ENCODE measurements at regions of chr5 and their contacts with region 1.

Region 1: GRCh38 chr5:151051066-151051930 is 29.5 kb downstream of the TNIP1 start:
- DNase-seq: peak; percentile 69 to 83
- ATAC-seq: peak; percentile 83
- H3K4me3 ChIP-seq: no peak overlapping the region
- H3K27ac ChIP-seq: peak overlapping the region; percentile 56 to 73 (median 67)
- H3K4me1 ChIP-seq: peaks cover 8 to 10% of the 10 kb centered on the region in 2 donors
- H3K27me3 ChIP-seq: no peaks in the 10 kb centered on the region
- CTCF ChIP-seq: peak; percentile 88 to 96 (median 95)
- POLR2A ChIP-seq: no peak

Region 2: DNA sequence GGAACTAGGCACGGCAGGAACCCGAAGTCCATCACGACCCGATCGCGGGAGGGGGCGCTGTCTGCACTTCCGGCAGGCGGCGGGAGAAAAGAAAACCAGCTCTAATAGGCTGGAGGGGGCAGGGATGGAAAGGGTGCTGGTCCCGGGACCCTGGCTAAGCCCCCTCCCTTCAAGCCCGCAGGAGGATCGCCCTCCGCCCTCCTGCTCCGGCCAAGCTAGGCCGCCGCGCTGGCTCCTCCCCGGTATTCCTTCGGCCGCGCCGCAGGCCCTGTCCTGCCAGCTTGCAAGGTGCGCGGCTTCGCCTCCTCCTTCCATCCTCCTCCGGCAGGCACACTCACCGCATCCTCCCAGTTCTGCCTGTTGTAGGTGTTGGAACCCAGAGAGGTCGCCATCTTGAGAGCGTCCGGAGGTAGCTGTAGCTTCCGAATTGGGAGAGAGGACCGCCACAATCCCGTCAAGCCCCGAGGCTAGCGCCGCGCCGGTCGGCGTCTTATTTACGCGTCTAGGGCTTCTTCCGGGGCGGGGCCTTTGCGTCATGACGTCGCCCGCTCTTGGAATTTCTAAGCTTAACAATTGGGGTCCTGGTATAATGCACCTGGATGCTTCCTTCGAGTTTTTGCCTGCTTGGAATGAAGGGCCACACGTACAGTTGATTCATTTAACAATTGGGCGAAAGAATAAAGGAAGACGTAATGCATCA is 350.6 kb before region 1 on chr5 and contains the start of gene RBM22:
- in situ Hi-C with region 1: no loop called
- intact Hi-C with region 1: no loop called
- DNase-seq: peak; percentile 91 to 93
- ATAC-seq: peak; percentile 98
- H3K4me3 ChIP-seq: peak within 1 kb of the TSS; percentile 67 to 98 (median 98)
- H3K27ac ChIP-seq: peak within 1 kb of the TSS; percentile 89 to 99 (median 98)
- H3K4me1 ChIP-seq: peaks cover 13 to 14% of the 10 kb centered on the region in 2 donors
- H3K27me3 ChIP-seq: no peaks in the 10 kb centered on the region
- CTCF ChIP-seq: peak; percentile 52 to 84 (median 59)
- POLR2A ChIP-seq: peak; percentile 82 to 91
- total RNA-seq, gene RBM22: 22.5 to 31.0 (median 26.2) TPM

Region 3: DNA sequence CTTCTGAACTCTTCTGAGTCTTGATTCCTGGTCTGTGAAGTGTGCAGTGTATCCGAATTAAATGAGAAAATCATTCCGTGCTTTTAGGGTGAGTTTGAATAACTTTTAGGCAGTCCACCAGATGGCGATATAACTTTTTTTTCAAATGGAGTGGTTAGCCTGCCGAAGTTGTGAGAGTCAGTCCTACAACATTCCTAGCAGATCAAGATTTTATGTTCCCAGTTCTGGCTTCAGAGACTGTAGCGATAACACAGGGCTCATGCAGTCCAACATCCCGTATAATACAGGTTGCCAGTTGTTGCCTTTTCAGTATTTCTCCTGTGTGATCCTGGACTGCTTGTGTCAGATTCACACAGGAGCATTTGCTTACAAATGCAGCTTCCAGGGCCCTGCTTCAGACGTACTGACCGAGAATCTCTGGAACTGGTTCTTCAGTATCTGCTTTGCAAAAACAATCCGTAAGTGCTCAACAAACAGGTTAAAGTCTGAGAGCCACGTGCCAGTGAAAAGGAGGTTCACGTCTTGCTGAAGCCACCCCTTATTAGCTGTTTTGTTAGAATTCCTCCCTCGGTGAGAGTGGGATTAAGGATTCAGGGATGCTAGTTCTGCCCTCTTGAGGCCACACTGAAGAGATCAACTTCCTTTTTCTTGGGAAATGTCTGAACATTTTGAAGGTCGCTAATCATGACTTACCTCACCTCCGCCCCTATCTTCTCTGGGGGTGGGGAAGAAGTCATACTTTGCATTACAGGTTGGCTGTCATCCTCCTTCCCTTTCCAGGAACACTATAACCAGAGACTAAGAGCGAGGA is 250.0 kb before region 1 on chr5:
- in situ Hi-C with region 1: no loop called
- intact Hi-C with region 1: loop called (anchors 2 kb)
- DNase-seq: no peak
- ATAC-seq: peak; percentile 80 to 93
- H3K4me3 ChIP-seq: peak overlapping the region; percentile 13 to 29 (median 20)
- H3K27ac ChIP-seq: peak overlapping the region; percentile 14 to 30 (median 26)
- H3K4me1 ChIP-seq: peaks cover 0 to 3% of the 10 kb centered on the region in 2 donors
- H3K27me3 ChIP-seq: no peaks in the 10 kb centered on the region
- CTCF ChIP-seq: peak; percentile 31 to 55 (median 45)
- POLR2A ChIP-seq: no peak

Region 4: GRCh38 chr5:151110122-151110681 is 58.9 kb after region 1 on chr5:
- in situ Hi-C with region 1: loop called (anchors 5 kb)
- intact Hi-C with region 1: loop called (anchors 1 kb)
- DNase-seq: peak in 1 of 2 donors; percentile 51
- ATAC-seq: peak; percentile 57 to 71
- H3K4me3 ChIP-seq: no peak overlapping the region
- H3K27ac ChIP-seq: peak overlapping the region; percentile 75 to 88 (median 80)
- H3K4me1 ChIP-seq: peaks cover 42 to 52% of the 10 kb centered on the region in 2 donors
- H3K27me3 ChIP-seq: no peaks in the 10 kb centered on the region
- CTCF ChIP-seq: peak in 2 of 5 experiments; percentile 14 to 41
- POLR2A ChIP-seq: no peak

Region 5: DNA sequence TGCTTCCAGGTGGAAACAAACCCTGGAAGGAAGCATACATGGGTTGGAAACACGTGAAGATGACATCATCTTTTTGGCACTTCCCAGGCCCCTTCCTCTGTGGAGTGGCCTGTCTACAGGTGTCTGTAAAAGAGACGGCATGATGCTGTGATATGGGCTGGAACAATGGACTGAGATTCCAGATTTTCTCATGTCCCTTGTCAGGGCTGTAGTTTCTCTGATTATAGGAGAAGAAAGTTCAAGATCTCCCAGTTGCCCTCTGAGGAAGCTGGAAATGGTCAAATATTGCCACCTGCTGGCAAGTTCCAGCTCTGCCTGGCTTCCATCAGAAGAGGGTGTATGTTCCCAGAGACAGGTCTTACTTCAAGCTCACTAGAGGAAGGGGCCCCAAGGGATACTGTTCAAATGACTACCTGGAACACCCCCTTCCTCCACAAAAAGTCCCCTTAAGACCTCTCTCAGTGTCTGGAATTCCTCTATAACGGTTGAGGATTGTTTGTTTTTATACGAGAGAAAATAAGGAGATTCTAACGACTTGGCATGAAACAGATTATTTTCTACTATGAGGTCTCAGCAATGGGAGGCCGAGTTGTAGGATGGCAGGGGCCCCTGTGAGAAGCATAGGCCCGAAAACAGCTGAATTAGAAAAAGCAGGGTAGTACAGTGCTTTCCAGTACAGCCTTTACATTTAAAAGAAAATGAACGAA is 113.5 kb after region 1 on chr5:
- in situ Hi-C with region 1: no loop called
- intact Hi-C with region 1: loop called (anchors 2 kb)
- DNase-seq: peak; percentile 65 to 83
- ATAC-seq: peak; percentile 91 to 94
- H3K4me3 ChIP-seq: no peak overlapping the region
- H3K27ac ChIP-seq: peak overlapping the region in 3 of 4 donors; percentile 29 to 41 (median 34)
- H3K4me1 ChIP-seq: peaks cover 12 to 21% of the 10 kb centered on the region in 2 donors
- H3K27me3 ChIP-seq: no peaks in the 10 kb centered on the region
- CTCF ChIP-seq: peak; percentile 79 to 92 (median 91)
- POLR2A ChIP-seq: no peak

Region 6: GRCh38 chr5:151771259-151772028 is 720.1 kb after region 1 on chr5 and contains the start of gene G3BP1:
- in situ Hi-C with region 1: no loop called
- intact Hi-C with region 1: loop called (anchors 10 kb)
- DNase-seq: peak; percentile 100
- ATAC-seq: peak; percentile 90 to 93
- H3K4me3 ChIP-seq: peak within 1 kb of the TSS; percentile 78 to 92 (median 89)
- H3K27ac ChIP-seq: peak within 1 kb of the TSS; percentile 98 to 100 (median 99)
- H3K4me1 ChIP-seq: peaks cover 38 to 42% of the 10 kb centered on the region in 2 donors
- H3K27me3 ChIP-seq: no peaks in the 10 kb centered on the region
- CTCF ChIP-seq: peak in 3 of 5 experiments; percentile 31 to 59 (median 46)
- POLR2A ChIP-seq: peak; percentile 95 to 98
- total RNA-seq, gene G3BP1: 80.5 to 114 (median 108) TPM